H1 (cell line): ENCODE measurements at regions of chr9 and their contacts with region 1.

Region 1: GRCh38 chr9:113682297-113682771 is 193.8 kb upstream of the ZNF618 start:
- DNase-seq: peak; percentile 66 to 94
- H3K4me3 ChIP-seq: no peak overlapping the region
- H3K27ac ChIP-seq: no peak overlapping the region
- H3K4me1 ChIP-seq: peaks cover 0 to under 1% (median under 1%) of the 10 kb centered on the region in 4 experiments; a peak in 1 of 7 replicates
- H3K27me3 ChIP-seq: peaks cover 2 to 19% (median 9%) of the 10 kb centered on the region in 4 experiments
- CTCF ChIP-seq: peak; percentile 73 to 97 (median 88)
- EP300 ChIP-seq: no peak
- POLR2A ChIP-seq: no peak
- RAD21 ChIP-seq: peak; percentile 79 to 86

Region 2: DNA sequence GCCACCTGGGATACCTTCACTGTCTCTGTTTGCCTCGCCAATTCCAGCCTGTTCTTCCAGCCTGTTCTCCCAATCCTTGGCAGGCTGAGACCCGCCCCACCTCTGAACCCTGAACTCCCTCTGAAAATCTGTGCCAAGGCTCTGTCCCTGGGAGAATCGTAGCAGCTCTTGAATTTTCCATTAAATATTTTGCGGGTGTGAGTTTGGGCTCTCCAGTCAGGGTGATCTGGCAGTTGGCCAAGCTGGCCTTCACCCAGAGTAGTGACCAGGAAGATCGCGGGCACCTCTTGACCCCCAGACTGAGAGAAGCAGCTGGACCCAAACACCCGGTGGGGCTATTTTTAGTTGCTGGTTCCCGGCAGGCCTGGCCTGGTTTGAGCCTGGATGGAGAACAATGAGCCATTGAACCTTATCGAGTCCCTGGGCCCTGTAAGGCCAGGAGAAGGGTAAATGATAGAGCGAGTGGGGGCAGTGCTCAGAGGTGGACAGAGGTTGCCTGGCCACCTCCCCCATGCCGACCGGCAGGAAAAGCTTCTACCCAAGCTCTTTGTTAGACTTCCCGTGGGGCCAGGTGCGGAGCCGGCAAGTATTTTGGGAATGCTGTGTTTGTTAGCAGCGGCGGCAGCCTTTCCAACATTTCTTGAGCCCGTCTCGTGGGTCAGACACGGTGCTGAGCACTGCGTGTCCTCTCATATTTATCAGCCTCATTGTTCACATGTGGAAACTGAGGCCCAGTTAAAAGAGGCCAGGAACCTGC is 72.6 kb before region 1 on chr9:
- CTCF ChIA-PET with region 1: no interaction called
- POLR2A ChIA-PET with region 1: no interaction called
- DNase-seq: no peak
- H3K4me3 ChIP-seq: peak overlapping the region in 1 of 4 experiments; percentile 27; a peak in 1 of 8 replicates
- H3K27ac ChIP-seq: peak overlapping the region; percentile 54
- H3K4me1 ChIP-seq: peaks cover 10 to 17% (median 12%) of the 10 kb centered on the region in 4 experiments
- H3K27me3 ChIP-seq: no peaks in the 10 kb centered on the region
- CTCF ChIP-seq: no peak
- EP300 ChIP-seq: peak in 1 of 2 experiments; percentile 37; a peak in 1 of 3 replicates
- POLR2A ChIP-seq: peak in 1 of 2 experiments; percentile 57; a peak in 2 of 3 replicates
- RAD21 ChIP-seq: peak in 1 of 2 experiments; percentile 1; a peak in 1 of 4 replicates

Region 3: DNA sequence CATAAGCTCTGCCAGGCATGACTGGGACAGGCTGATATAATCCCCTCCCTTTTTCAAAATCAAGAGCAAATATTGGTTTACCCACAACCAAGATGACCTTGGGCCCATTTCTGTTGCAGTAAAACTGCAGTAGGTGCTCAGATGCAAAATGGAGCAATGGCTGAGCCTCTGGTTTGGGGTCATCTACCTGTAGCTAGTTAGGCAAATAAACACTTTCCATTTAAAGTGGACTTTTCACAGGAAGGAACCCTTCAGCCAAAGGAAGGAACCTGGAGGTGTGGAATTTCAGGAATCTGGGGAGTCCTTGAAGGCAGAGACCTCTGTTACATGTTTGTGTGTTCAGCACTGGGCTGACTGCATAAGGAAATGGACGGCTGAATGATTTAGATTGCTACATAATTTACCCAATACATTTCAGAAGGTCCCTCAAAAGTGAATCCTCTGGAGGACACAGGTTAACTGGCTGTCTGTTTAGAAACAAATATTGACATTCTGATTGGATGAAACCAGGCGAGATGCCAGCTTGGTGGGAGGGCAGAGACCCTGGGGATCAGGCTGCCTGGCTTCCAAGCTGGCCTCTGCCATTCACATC is 23.7 kb after region 1 on chr9:
- CTCF ChIA-PET with region 1: interaction called, 17 read pairs
- POLR2A ChIA-PET with region 1: no interaction called
- DNase-seq: no peak
- H3K4me3 ChIP-seq: no peak overlapping the region
- H3K27ac ChIP-seq: 0 out of 2 replicates have a peak overlapping the region, but pooled peaks have one; percentile 7
- H3K4me1 ChIP-seq: peaks cover 3 to 16% (median 9%) of the 10 kb centered on the region in 4 experiments
- H3K27me3 ChIP-seq: peaks cover 0 to 3% (median 0%) of the 10 kb centered on the region in 4 experiments; a peak in 1 of 7 replicates
- CTCF ChIP-seq: no peak
- EP300 ChIP-seq: no peak
- POLR2A ChIP-seq: no peak
- RAD21 ChIP-seq: no peak

Region 4: GRCh38 chr9:113828221-113828620 is 145.9 kb after region 1 on chr9:
- CTCF ChIA-PET with region 1: no interaction called
- POLR2A ChIA-PET with region 1: no interaction called
- DNase-seq: no peak
- H3K4me3 ChIP-seq: no peak overlapping the region
- H3K27ac ChIP-seq: no peak overlapping the region
- H3K4me1 ChIP-seq: no peaks in the 10 kb centered on the region
- H3K27me3 ChIP-seq: no peaks in the 10 kb centered on the region
- CTCF ChIP-seq: no peak
- EP300 ChIP-seq: no peak
- POLR2A ChIP-seq: no peak
- RAD21 ChIP-seq: no peak